ENCODE measurements at regions of chr17 and their contacts with region 1.

Region 1: DNA sequence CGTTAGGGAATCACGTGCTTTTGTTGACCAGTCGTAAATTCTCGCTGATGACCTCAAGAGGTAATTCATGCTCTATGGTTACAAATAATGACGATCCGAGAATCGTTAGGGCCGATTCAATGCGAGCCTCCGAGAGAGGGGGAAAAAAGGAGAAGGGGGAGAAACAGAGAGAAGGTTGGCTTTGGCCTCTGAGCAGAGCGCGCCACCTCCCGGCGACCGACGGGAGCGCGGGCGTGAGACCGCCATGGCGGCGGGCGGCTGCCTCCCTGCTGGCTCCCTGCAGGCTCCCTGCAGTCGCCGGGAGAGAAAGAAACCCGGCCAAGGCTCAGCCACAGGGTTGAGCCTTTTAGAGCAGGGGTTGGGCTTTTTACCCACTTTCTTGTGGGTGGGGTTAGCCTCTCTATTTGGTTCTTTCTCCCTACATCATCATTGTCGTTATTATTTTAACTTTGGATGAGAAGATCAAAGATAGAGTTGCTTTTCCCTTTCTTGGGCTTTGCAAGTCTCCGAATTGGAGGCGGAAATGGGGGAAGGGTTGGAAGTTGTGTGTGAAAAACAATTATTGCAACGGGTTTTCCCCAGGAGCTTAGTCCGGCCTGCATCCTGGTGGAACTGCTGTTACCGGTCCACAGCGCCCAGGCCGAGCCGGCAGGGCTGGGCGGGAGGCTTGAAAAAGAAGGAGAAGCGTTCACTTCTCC is 410 bp upstream of the HOXB5 start:
- DNase-seq: peak; percentile 89
- ATAC-seq: peak; percentile 76

Region 2: GRCh38 chr17:48347177-48347576 is 246.8 kb before region 1 on chr17:
- intact Hi-C with region 1: loop called (anchors 5 kb)
- DNase-seq: no peak
- ATAC-seq: no peak

Region 3: GRCh38 chr17:48492401-48493298 is 101.3 kb before region 1 on chr17:
- intact Hi-C with region 1: loop called (anchors 5 kb)
- DNase-seq: peak; percentile 84
- ATAC-seq: peak; percentile 96

Region 4: GRCh38 chr17:48625495-48626244 is 31.7 kb after region 1 on chr17:
- intact Hi-C with region 1: no loop called
- DNase-seq: no peak
- ATAC-seq: no peak

Region 5: DNA sequence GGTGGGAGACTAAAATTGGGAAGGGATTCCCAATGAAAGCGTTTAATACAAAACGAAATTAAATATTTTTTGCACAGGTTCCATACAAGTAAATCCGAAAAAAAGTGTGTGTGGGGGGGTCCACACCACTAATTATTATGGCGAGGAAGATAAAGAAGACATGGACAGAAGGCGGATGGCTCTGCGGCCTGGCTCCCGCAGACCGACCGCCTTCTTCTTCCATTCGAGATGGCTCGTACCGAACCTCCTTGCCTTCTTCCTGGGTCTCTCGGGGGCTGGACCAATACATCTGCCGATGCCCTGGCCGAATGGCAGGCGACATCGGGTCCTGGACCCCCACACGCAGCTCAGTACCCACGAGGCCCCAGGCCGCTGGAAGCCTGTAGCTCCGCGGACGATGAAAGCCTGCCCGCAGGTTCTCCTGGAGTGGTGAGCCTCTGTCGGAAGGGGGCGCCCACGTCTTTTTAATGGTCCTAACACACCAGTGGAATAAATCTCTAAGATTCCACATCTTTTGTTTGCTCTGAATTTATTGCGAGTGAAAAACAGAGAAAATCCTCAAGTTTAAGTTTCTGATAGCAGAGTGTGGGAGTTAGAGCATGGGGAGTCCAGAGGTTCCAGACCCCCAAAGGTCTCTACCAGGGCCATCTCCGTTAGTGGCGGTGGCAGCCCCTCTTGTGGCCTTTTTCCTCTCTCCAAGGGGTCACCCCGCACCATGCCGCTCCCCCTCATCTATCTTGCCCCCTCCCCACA is 130.4 kb after region 1 on chr17:
- intact Hi-C with region 1: no loop called
- DNase-seq: peak; percentile 93
- ATAC-seq: peak; percentile 87

Measured in sciatic nerve (tissue), 2 donors.